ENCODE measurements at regions of chr12 and their contacts with region 1.

Region 1: GRCh38 chr12:57016318-57016717 is at the start of gene TAC3:
- DNase-seq: no peak
- H3K4me3 ChIP-seq: no peak within 1 kb of the TSS
- H3K27me3 ChIP-seq: peaks cover 36% of the 10 kb centered on the region
- CTCF ChIP-seq: no peak
- polyA plus RNA-seq, gene TAC3: not detected in 2 replicates

Region 2: GRCh38 chr12:57546438-57547383 is 530.4 kb after region 1 on chr12 and contains the start of gene DCTN2:
- CTCF ChIA-PET with region 1: no interaction called
- POLR2A ChIA-PET with region 1: interaction called, 14 read pairs
- DNase-seq: peak; percentile 84
- H3K4me3 ChIP-seq: peak within 1 kb of the TSS; percentile 100
- H3K27me3 ChIP-seq: peaks cover 6% of the 10 kb centered on the region
- CTCF ChIP-seq: peak; percentile 34
- polyA plus RNA-seq, gene DCTN2: 133 and 167 TPM in 2 replicates

Measured in BJ (cell line).